PC-3 (cell line): ENCODE measurements at regions of chr4 and their contacts with region 1.

Region 1: DNA sequence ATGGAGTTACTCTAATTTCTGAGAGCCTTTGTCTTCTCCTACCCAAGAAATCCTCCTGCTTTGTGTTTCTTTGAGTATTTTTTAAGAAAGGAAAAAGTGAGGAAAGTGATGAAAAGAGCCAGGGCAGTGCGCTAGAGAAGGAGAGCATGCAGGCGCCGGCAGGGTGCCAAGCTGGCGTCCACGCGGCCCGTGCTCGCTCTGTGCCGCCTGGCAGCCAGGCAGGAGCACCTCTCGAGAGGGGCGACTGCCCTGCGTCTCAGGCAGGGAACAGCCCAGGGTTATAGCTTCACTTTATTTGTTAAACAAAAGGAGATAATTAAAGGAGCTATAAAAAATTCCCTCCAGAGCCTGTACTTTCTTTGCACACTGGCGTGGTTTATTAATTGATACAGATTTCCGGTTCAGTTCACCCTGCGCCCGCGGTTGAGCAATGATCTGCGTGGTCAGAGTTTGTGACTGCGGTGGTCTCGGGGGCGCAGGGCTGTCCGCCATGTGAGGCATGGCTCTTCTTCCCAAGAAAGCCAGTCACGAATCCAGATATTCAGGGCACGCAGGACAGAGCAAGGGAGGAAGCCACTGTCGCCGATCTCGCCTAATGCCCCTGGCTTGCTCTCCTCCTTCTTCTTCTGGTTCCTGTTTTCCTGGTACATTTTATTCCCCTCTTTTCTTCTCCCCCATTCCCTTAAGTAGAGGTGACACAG is 110.8 kb upstream of the PAQR3 start:
- DNase-seq: peak; percentile 8
- ATAC-seq: peak; percentile 68
- H3K4me3 ChIP-seq: peak overlapping the region; percentile 62
- H3K27ac ChIP-seq: no peak overlapping the region
- H3K4me1 ChIP-seq: peaks cover 7% of the 10 kb centered on the region; the same call in 1 of the 2 replicates
- H3K27me3 ChIP-seq: 0 out of 2 replicates have a peak, but pooled peaks cover 14% of the 10 kb centered on the region
- CTCF ChIP-seq: no peak

Region 2: DNA sequence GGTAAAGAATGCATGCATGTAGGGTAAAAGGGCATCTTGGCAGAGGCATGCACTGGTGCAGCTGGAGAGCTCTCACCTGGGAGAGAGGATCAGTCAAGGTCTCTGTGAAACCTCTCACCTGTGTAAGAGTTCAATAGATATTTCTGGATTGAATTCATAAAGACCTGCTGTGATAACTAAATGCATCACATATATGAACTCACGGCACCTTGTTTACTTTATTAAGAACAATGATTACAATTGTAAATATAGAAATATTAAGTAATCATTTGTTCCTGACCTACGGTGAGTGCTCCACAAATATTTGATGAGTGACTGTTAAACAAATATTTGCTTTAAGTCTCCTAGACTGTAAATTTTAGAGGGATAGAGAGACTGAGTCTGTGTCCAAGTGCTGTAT is 24.8 kb before region 1 on chr4:
- CTCF ChIA-PET with region 1: no interaction called
- POLR2A ChIA-PET with region 1: interaction called, 14 read pairs
- intact Hi-C with region 1: no loop called
- DNase-seq: peak; percentile 83
- ATAC-seq: peak; percentile 87
- H3K4me3 ChIP-seq: no peak overlapping the region
- H3K27ac ChIP-seq: peak overlapping the region; percentile 23
- H3K4me1 ChIP-seq: peaks cover 34% of the 10 kb centered on the region
- H3K27me3 ChIP-seq: no peaks in the 10 kb centered on the region
- CTCF ChIP-seq: no peak

Region 3: DNA sequence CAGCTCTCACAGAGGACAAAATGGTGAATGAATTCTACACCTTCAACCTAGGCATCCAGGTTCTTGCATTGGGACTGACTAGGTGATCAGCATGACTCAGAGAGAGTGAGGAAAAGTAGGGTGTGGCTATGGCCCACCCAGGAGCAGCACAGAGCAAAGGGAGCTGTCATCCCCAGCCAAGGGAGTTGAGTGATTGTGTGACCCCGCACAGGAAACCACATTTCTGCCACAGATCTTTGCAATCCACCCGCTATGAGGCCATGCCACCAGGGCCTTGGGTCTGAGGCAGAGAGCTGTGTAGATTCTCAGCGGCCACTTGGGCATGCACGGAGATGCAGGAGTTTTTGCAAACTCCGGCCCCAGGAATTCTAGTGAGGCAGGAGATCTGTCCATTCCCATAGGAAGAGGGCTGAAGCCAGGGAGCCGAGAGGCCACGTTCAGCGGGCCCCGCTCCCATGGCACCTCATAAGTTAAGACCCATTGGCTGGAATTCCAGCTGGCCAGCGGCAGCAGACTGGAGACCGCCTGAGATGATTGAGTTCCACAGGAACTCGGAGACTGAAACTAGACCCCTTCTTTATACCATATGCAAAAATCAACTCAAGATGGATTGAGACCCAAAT is 200.0 kb after region 1 on chr4:
- CTCF ChIA-PET with region 1: no interaction called
- POLR2A ChIA-PET with region 1: no interaction called
- intact Hi-C with region 1: no loop called
- DNase-seq: no peak
- ATAC-seq: no peak
- H3K4me3 ChIP-seq: no peak overlapping the region
- H3K27ac ChIP-seq: no peak overlapping the region
- H3K4me1 ChIP-seq: no peaks in the 10 kb centered on the region
- H3K27me3 ChIP-seq: no peaks in the 10 kb centered on the region
- CTCF ChIP-seq: no peak

Region 4: DNA sequence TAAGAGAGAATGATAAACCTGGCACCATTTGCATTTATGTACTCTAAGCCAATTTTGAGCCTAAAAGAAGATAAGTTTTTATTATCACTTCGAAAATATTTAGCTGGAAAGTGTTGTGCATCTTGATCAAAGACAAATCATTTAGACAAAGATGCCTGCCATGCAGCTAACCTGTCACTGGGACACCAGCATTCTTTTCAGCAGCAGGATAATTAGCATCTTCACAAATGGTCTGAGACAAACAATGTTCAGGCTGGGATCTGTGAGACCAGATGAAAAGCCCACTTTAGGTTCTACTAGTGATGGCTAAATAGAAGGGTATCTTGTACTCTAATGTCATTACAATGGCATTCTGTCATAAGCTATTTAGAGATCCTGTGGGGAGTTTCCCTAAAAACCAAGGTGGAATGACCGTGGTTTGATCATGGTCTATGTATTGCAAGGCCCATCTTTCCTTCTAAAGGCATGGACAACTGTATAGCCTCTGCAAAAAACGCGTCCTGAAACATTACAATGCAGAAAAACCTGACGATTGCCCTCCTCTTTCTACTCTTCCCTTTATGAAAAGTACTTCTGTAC is 1154.5 kb after region 1 on chr4:
- CTCF ChIA-PET with region 1: no interaction called
- POLR2A ChIA-PET with region 1: interaction called, 12 read pairs
- intact Hi-C with region 1: no loop called
- DNase-seq: no peak
- ATAC-seq: no peak
- H3K4me3 ChIP-seq: no peak overlapping the region
- H3K27ac ChIP-seq: no peak overlapping the region
- H3K4me1 ChIP-seq: no peaks in the 10 kb centered on the region
- H3K27me3 ChIP-seq: no peaks in the 10 kb centered on the region
- CTCF ChIP-seq: no peak